Mammary epithelial cell (primary cell): ENCODE measurements at regions of chr10 and their contacts with region 1.

Region 1: GRCh38 chr10:49518982-49519578 is 19.8 kb downstream of the ERCC6 start:
- DNase-seq: peak; percentile 26
- H3K4me3 ChIP-seq: no peak overlapping the region
- H3K27ac ChIP-seq: no peak overlapping the region
- H3K4me1 ChIP-seq: no peaks in the 10 kb centered on the region
- H3K27me3 ChIP-seq: no peaks in the 10 kb centered on the region
- CTCF ChIP-seq: peak; percentile 63 to 68

Region 2: GRCh38 chr10:49484486-49485235 is 34.4 kb before region 1 on chr10:
- CTCF ChIA-PET with region 1: no interaction called
- dilution Hi-C with region 1: no loop called
- in situ Hi-C with region 1: no loop called
- intact Hi-C with region 1: loop called (anchors 5 kb)
- DNase-seq: no peak
- H3K4me3 ChIP-seq: no peak overlapping the region
- H3K27ac ChIP-seq: no peak overlapping the region
- H3K4me1 ChIP-seq: no peaks in the 10 kb centered on the region
- H3K27me3 ChIP-seq: no peaks in the 10 kb centered on the region
- CTCF ChIP-seq: no peak